A673 (cell line): ENCODE measurements at regions of chr7 and their contacts with region 1.

Region 1: GRCh38 chr7:33986941-33987588 is 81.7 kb downstream of the BMPER start:
- DNase-seq: peak; percentile 88
- H3K4me3 ChIP-seq: no peak overlapping the region
- H3K27ac ChIP-seq: peak overlapping the region; percentile 3
- H3K4me1 ChIP-seq: peaks cover 17% of the 10 kb centered on the region
- H3K27me3 ChIP-seq: no peaks in the 10 kb centered on the region
- CTCF ChIP-seq: no peak

Region 2: GRCh38 chr7:33940503-33940902 is 46.6 kb before region 1 on chr7:
- CTCF ChIA-PET with region 1: no interaction called
- POLR2A ChIA-PET with region 1: no interaction called
- intact Hi-C with region 1: no loop called
- DNase-seq: no peak
- H3K4me3 ChIP-seq: no peak overlapping the region
- H3K27ac ChIP-seq: no peak overlapping the region
- H3K4me1 ChIP-seq: no peaks in the 10 kb centered on the region
- H3K27me3 ChIP-seq: no peaks in the 10 kb centered on the region
- CTCF ChIP-seq: no peak

Region 3: GRCh38 chr7:34042406-34042805 is 55.3 kb after region 1 on chr7:
- CTCF ChIA-PET with region 1: no interaction called
- POLR2A ChIA-PET with region 1: no interaction called
- intact Hi-C with region 1: loop called (anchors 10 kb)
- DNase-seq: no peak
- H3K4me3 ChIP-seq: no peak overlapping the region
- H3K27ac ChIP-seq: peak overlapping the region; percentile 17
- H3K4me1 ChIP-seq: peaks cover 59% of the 10 kb centered on the region
- H3K27me3 ChIP-seq: no peaks in the 10 kb centered on the region
- CTCF ChIP-seq: no peak

Region 4: GRCh38 chr7:34158368-34159155 is 171.5 kb after region 1 on chr7:
- CTCF ChIA-PET with region 1: no interaction called
- POLR2A ChIA-PET with region 1: no interaction called
- intact Hi-C with region 1: loop called (anchors 10 kb)
- DNase-seq: peak; percentile 29
- H3K4me3 ChIP-seq: no peak overlapping the region
- H3K27ac ChIP-seq: no peak overlapping the region
- H3K4me1 ChIP-seq: peaks cover 40% of the 10 kb centered on the region
- H3K27me3 ChIP-seq: no peaks in the 10 kb centered on the region
- CTCF ChIP-seq: peak; percentile 46

Region 5: GRCh38 chr7:34249192-34249591 is 262.1 kb after region 1 on chr7:
- CTCF ChIA-PET with region 1: no interaction called
- POLR2A ChIA-PET with region 1: no interaction called
- intact Hi-C with region 1: no loop called
- DNase-seq: no peak
- H3K4me3 ChIP-seq: no peak overlapping the region
- H3K27ac ChIP-seq: no peak overlapping the region
- H3K4me1 ChIP-seq: no peaks in the 10 kb centered on the region
- H3K27me3 ChIP-seq: no peaks in the 10 kb centered on the region
- CTCF ChIP-seq: no peak